ENCODE measurements at regions of chr3 and their contacts with region 1.

Region 1: GRCh38 chr3:150763122-150763841 is at the start of gene SIAH2:
- DNase-seq: peak; percentile 95
- H3K4me3 ChIP-seq: peak within 1 kb of the TSS; percentile 52 to 93 (median 89)
- H3K27ac ChIP-seq: peak within 1 kb of the TSS; percentile 96 to 99 (median 98)
- H3K4me1 ChIP-seq: peaks cover 0 to 54% (median 33%) of the 10 kb centered on the region in 4 donors
- H3K27me3 ChIP-seq: no peaks in the 10 kb centered on the region
- CTCF ChIP-seq: no peak
- EP300 ChIP-seq: no peak
- POLR2A ChIP-seq: peak; percentile 81
- total RNA-seq, gene SIAH2: 24.8 to 102 (median 38.8) TPM

Region 2: DNA sequence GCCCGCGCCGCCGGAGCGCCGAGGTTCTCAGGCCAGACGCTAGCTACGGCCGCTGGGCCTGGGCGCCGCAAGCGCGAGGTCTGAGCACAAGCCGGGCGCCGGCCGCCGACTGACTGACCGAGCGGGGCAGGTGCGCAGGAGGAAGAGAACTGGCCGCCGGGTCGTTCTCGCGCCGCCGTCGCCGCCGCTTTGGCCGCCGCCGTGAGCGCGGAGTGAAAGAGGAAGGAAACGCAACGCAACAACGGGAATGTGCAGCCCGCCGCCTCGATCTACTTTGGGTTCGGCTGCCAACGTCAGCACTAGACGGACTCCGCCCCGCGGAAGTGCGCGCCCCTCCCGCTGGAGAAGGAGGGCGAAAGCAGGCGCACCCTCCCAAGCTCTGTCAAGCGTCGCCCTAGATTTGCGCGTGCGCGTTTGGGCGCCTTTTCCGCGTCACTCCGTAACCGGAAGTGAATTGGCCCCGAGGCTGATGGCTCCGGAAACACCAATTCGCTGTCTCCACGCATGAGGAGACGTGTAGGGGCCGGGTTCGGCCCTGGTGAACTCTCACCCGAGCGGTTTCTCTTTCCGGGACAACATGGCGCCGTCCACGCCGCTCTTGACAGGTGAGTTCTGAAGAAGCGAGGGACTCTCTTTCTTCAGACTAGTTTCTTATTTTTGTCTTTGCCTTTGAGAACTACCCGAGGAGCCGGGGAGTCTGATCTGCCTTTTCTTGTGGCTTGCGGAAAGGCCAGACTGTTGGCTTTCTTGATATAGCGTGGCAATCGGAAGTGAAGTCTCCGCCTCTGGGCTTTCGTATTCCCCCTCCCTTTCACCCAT is 216.8 kb before region 1 on chr3 and contains the starts of genes EIF2A and SERP1:
- in situ Hi-C with region 1: no loop called
- intact Hi-C with region 1: loop called (anchors 5 kb)
- DNase-seq: peak; percentile 99
- H3K4me3 ChIP-seq: peak within 1 kb of the TSS; percentile 67 to 94 (median 82)
- H3K27ac ChIP-seq: peak within 1 kb of the TSS; percentile 96 to 100 (median 98)
- H3K4me1 ChIP-seq: peaks cover 20 to 38% (median 27%) of the 10 kb centered on the region in 4 donors
- H3K27me3 ChIP-seq: no peaks in the 10 kb centered on the region
- CTCF ChIP-seq: no peak
- EP300 ChIP-seq: no peak
- POLR2A ChIP-seq: peak; percentile 99
- total RNA-seq, gene EIF2A: 20.9 to 132 (median 72.2) TPM
- total RNA-seq, gene SERP1: 96.9 to 341 (median 275) TPM

Region 3: DNA sequence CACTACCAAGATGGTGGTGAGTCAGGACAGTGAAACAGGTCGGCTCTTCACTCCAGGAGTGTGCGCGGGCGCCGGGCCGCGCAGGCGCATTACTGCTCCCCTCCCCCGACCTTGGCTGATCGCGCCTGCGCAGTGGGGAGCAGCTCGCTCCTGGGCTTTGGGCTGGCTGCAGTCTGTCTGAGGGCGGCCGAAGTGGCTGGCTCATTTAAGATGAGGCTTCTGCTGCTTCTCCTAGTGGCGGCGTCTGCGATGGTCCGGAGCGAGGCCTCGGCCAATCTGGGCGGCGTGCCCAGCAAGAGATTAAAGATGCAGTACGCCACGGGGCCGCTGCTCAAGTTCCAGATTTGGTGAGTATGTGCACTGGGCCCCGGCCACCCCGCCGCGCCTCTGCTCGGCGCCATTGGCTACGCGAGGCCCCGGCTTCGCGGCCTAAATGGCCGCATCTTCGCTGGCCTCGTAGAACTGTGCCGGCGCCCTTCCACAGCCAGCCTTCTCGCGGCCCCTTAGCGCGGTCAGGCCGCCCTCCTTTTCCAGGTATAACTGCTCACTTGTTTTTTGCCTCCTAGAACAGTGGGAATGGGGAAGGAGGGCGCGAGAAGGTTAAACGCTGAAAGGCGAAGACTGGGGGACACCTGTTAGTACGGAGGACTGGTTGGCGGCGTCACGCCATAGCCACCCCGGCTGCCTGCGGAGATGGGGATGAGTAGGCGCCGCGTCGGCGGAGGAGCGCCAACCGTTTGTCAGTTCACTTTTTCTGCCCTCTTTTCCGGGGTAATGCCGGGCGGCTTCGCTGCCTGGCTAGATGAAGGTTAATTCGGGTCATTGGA is 159.9 kb before region 1 on chr3 and contains the start of gene SELENOT:
- in situ Hi-C with region 1: loop called in 1 of 4 experiments (anchors 10 kb)
- intact Hi-C with region 1: no loop called
- DNase-seq: peak; percentile 95
- H3K4me3 ChIP-seq: peak within 1 kb of the TSS; percentile 63 to 76 (median 68)
- H3K27ac ChIP-seq: peak within 1 kb of the TSS; percentile 96 to 98 (median 97)
- H3K4me1 ChIP-seq: peaks cover 17 to 48% (median 34%) of the 10 kb centered on the region in 4 donors
- H3K27me3 ChIP-seq: no peaks in the 10 kb centered on the region
- CTCF ChIP-seq: peak in 4 of 5 experiments; percentile 22 to 53 (median 34)
- EP300 ChIP-seq: no peak
- POLR2A ChIP-seq: peak; percentile 98
- total RNA-seq, gene SELENOT: 36.3 to 149 (median 95.1) TPM

Region 4: DNA sequence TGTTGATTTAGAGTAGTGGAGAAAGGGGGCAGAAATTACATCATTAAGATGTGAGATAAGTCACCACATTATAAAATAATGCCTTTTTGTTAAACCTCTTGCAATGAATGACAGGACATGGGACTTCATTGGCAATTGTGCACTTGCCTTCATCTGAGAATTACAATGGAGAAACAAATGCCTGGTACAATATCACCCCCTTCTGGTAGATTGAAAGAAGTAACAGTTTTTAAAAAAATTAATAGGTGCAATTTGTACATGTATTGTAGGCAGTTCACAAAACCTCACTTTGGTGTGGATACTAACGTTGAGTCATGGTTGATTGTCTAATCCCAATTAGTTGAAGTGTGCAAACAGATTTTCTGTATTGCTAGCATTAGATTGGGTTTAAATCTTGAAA is 519.6 kb after region 1 on chr3:
- in situ Hi-C with region 1: loop called in 1 of 4 experiments (anchors 25 kb)
- intact Hi-C with region 1: no loop called
- DNase-seq: no peak
- H3K4me3 ChIP-seq: no peak overlapping the region
- H3K27ac ChIP-seq: peak overlapping the region in 3 of 4 donors; percentile 14 to 47 (median 25)
- H3K4me1 ChIP-seq: peaks cover 0 to 22% (median 8%) of the 10 kb centered on the region in 4 donors
- H3K27me3 ChIP-seq: no peaks in the 10 kb centered on the region
- CTCF ChIP-seq: peak; percentile 65 to 85 (median 69)
- EP300 ChIP-seq: no peak
- POLR2A ChIP-seq: no peak